ENCODE measurements at regions of chr7 and their contacts with region 1.

Region 1: DNA sequence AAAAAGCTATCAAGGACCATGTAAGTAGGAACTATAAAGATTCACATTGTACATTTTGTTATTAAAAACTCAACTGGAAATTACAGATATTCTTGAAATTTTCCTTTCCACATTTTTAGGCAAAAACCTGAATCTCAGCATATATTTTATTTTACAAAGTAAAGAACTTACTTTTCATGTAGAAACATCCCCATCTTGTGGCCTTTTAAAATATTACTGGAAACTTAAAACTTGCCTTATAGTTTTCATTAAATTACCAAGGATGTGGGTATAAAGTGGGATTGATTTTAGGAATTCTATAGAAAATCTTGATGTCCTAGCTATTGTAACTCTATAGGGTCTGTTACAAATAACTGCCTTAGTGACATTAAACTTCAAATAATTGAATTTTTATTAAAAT is 10.6 kb downstream of the DBF4 start:
- DNase-seq: peak in 1 of 2 experiments; percentile 41
- ATAC-seq: no peak
- H3K4me3 ChIP-seq: no peak overlapping the region
- H3K27ac ChIP-seq: no peak overlapping the region
- H3K4me1 ChIP-seq: no peaks in the 10 kb centered on the region
- CTCF ChIP-seq: peak; percentile 60; the same call in 2 of the 3 replicates
- EP300 ChIP-seq: no peak
- POLR2A ChIP-seq: no peak
- RAD21 ChIP-seq: peak; percentile 49 to 75

Region 2: DNA sequence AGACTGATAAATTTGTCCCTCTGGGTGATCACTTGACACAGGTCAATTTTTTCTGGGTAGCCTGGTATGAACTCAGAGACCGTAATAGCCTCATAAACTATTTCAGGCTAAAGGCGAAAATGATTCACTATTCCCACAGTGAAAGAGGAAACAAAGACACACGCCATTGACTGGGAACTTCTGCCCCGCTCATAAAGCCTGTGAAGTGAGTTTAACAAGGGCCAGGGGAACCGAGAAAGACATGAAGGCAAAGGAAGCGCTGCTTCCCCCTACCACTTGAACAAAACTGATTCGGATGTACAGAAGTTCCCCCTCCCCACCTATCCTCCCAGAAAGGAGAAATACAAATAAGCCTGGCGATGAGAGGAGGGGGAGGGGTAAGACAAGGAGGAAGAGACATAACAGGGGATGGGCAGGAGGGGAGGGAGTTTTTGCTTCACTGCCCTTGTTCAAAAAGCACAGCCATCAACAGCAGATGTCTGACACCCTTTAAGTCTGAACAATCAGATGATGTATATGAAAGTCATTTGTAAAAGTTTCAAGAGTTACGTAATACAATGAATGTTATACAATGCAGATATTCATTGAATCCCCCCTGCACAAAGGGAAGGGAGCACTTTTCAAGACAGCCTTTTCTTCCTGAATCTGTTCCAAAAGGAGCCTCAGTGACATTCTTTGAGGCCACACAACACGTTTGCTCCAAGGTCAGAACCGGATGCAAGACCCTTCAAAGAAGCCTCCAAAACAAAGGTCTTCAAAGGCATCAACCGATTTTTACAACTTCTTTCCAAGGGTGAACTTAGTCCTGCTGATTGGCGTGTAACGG is 412.1 kb before region 1 on chr7:
- CTCF ChIA-PET with region 1: no interaction called
- POLR2A ChIA-PET with region 1: no interaction called
- DNase-seq: no peak
- ATAC-seq: no peak
- H3K4me3 ChIP-seq: peak overlapping the region; percentile 41
- H3K27ac ChIP-seq: no peak overlapping the region
- H3K4me1 ChIP-seq: 0 out of 3 replicates have a peak, but pooled peaks cover 5% of the 10 kb centered on the region
- CTCF ChIP-seq: no peak
- EP300 ChIP-seq: no peak
- POLR2A ChIP-seq: no peak
- RAD21 ChIP-seq: no peak

Region 3: DNA sequence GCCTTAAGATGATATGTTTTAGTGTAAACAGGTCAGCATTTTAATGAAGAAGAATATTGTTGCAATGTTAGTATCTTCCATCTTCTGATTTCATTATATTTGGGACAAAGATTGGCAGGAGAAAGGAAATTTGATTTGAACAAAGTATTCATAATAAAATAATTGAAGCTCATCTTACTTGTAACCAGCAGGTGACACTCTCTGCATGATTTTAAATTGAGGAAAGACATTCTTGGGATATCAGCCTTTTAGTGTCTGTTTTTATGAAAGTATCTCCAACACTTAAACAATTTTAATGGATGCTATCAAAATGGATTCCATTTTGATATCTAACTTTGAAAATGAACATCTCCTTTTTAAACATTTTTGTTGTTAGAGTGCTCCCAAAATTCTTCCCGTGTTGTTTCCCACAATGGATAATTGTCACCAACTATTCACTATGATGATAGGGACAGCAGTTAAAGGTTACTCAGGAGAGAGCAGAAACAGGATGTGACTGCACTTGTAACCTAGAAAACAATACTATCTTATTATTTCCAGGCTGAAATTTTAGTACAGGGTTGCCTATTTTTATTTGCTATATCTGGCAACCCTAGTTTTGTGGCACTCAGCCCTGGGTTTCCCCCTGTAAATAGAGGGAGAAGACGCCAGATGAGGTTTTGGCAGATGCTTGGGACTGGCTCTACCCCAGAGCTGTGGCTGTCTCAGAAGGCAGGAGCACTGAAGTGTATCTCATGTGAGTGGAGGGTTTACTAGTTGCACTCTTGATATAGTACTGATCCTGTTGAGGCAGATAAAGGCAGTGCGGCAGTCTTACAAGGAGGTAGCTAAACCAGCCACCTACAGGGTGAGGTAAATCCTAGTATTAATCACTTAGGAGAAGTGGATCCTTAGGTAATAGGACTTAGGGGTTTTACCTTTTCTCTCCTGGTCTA is 380.4 kb before region 1 on chr7:
- CTCF ChIA-PET with region 1: interaction called, 11 read pairs
- POLR2A ChIA-PET with region 1: no interaction called
- DNase-seq: peak in 1 of 2 experiments; percentile 24
- ATAC-seq: peak in 1 of 2 experiments; percentile 27; a peak in 1 of 6 replicates
- H3K4me3 ChIP-seq: no peak overlapping the region
- H3K27ac ChIP-seq: no peak overlapping the region
- H3K4me1 ChIP-seq: no peaks in the 10 kb centered on the region
- CTCF ChIP-seq: peak; percentile 56
- EP300 ChIP-seq: no peak
- POLR2A ChIP-seq: no peak
- RAD21 ChIP-seq: peak; percentile 63 to 65; a peak in 4 of 5 replicates

Region 4: GRCh38 chr7:87797798-87798403 is 89.0 kb before region 1 on chr7:
- CTCF ChIA-PET with region 1: interaction called, 18 read pairs
- POLR2A ChIA-PET with region 1: no interaction called
- DNase-seq: peak; percentile 7 to 62
- ATAC-seq: peak; percentile 84 to 89
- H3K4me3 ChIP-seq: no peak overlapping the region
- H3K27ac ChIP-seq: no peak overlapping the region
- H3K4me1 ChIP-seq: no peaks in the 10 kb centered on the region
- CTCF ChIP-seq: peak; percentile 77
- EP300 ChIP-seq: no peak
- POLR2A ChIP-seq: no peak
- RAD21 ChIP-seq: peak; percentile 75 to 77

Region 5: GRCh38 chr7:88132725-88133124 is 245.8 kb after region 1 on chr7:
- CTCF ChIA-PET with region 1: no interaction called
- POLR2A ChIA-PET with region 1: no interaction called
- DNase-seq: no peak
- ATAC-seq: no peak
- H3K4me3 ChIP-seq: no peak overlapping the region
- H3K27ac ChIP-seq: no peak overlapping the region
- H3K4me1 ChIP-seq: no peaks in the 10 kb centered on the region
- CTCF ChIP-seq: no peak
- EP300 ChIP-seq: no peak
- POLR2A ChIP-seq: no peak
- RAD21 ChIP-seq: no peak